HCT116 (cell line): ENCODE measurements at regions of chr17 and their contacts with region 1.

Region 1: DNA sequence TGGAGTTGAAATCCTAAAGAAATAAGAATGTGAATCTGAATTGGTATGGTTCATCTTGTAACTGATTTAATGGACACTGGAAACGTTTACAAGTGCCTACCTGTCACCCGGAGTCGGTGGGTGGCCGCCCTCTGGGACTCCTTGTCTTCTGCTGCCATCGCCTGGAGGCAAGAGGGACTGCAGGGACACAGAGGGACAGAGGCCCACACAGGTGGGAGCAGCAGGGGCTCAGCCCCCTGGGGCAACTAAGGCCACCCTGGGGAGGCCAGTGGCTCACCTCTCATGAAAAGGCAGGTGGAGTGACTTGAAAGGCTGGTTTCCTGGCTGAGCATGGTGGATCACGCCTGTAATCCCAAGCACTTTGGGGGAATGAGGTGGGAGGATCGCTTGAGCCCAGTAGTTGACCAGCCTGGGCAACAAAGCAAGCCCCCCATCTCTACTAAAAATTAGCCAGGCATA is 23.2 kb downstream of the TMEM92 start:
- DNase-seq: peak; percentile 80
- ATAC-seq: peak; percentile 99
- H3K4me3 ChIP-seq: no peak overlapping the region
- H3K27ac ChIP-seq: no peak overlapping the region
- H3K4me1 ChIP-seq: no peaks in the 10 kb centered on the region
- H3K27me3 ChIP-seq: no peaks in the 10 kb centered on the region
- CTCF ChIP-seq: peak; percentile 74 to 99 (median 98)
- POLR2A ChIP-seq: no peak
- RAD21 ChIP-seq: peak; percentile 100

Region 2: GRCh38 chr17:50123649-50124349 is 173.6 kb before region 1 on chr17:
- CTCF ChIA-PET with region 1: no interaction called
- POLR2A ChIA-PET with region 1: no interaction called
- RAD21 ChIA-PET with region 1: no interaction called
- intact Hi-C with region 1: no loop called
- DNase-seq: no peak
- ATAC-seq: peak; percentile 72
- H3K4me3 ChIP-seq: peak overlapping the region; percentile 37 to 49
- H3K27ac ChIP-seq: peak overlapping the region; percentile 34
- H3K4me1 ChIP-seq: peaks cover 9 to 22% of the 10 kb centered on the region in 2 experiments; a peak in 3 of 4 replicates
- H3K27me3 ChIP-seq: peaks cover 6% of the 10 kb centered on the region; the same call in 1 of the 2 replicates
- CTCF ChIP-seq: no peak
- POLR2A ChIP-seq: peak; percentile 63
- RAD21 ChIP-seq: no peak

Region 3: GRCh38 chr17:50169121-50169764 is 128.2 kb before region 1 on chr17:
- CTCF ChIA-PET with region 1: interaction called, 20 read pairs
- POLR2A ChIA-PET with region 1: no interaction called
- RAD21 ChIA-PET with region 1: interaction called in 1 of 2 experiments, 9 read pairs
- intact Hi-C with region 1: loop called (anchors 2 kb)
- DNase-seq: peak; percentile 78
- ATAC-seq: peak; percentile 77
- H3K4me3 ChIP-seq: peak overlapping the region; percentile 19 to 27; a peak in 3 of 4 replicates
- H3K27ac ChIP-seq: no peak overlapping the region
- H3K4me1 ChIP-seq: peaks cover 9 to 46% of the 10 kb centered on the region in 2 experiments
- H3K27me3 ChIP-seq: no peaks in the 10 kb centered on the region
- CTCF ChIP-seq: peak; percentile 97 to 100 (median 98)
- POLR2A ChIP-seq: no peak
- RAD21 ChIP-seq: peak; percentile 99

Region 4: DNA sequence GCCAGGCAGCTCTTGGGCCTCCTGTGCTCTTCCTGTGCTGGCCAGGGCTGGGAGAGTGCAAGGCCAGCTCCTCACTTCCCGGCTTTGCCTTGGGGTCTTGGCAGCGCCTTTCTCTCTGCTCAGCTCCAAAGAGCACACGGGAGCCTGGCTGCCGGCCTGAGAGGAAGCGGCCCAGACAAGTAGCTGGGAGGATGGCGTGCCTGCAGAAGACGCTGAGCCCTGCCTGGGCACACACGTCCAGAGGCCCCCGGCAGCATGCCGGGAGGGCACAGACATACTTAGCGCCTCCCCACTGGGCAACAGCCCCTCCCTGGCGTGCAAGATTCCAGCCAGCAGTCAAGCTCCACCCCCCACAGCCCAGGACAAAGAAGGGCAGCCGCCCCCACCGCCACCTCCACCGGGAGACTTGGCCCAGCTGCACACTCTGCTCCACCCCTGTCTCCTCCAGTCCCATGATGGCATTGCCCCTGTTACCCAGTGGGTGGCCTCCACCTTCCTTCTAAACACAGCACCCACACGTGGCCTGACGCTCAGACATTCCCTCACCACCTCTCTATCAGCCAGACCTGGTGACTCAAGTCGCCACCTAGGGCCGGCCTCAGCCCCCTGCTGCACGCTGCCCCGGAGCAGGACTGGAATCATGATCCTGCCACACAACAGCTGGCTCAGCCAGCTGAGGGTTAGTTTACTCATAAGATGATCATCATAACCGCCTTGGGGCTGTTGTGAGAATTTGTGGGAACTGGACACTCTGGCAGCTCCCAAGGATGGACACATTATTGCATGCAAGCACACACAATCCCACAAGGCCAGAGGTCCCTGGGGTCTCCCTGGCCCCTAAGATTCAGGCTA is 119.2 kb before region 1 on chr17:
- CTCF ChIA-PET with region 1: interaction called, 16 read pairs
- POLR2A ChIA-PET with region 1: no interaction called
- RAD21 ChIA-PET with region 1: no interaction called
- intact Hi-C with region 1: no loop called
- DNase-seq: peak; percentile 90
- ATAC-seq: peak; percentile 94
- H3K4me3 ChIP-seq: peak overlapping the region; percentile 22 to 43
- H3K27ac ChIP-seq: peak overlapping the region; percentile 61
- H3K4me1 ChIP-seq: peaks cover 41 to 56% of the 10 kb centered on the region in 2 experiments
- H3K27me3 ChIP-seq: no peaks in the 10 kb centered on the region
- CTCF ChIP-seq: peak; percentile 80 to 96 (median 82)
- POLR2A ChIP-seq: no peak
- RAD21 ChIP-seq: peak; percentile 72

Region 5: GRCh38 chr17:50269477-50270434 is 27.7 kb before region 1 on chr17:
- CTCF ChIA-PET with region 1: interaction called, 29 read pairs
- POLR2A ChIA-PET with region 1: no interaction called
- RAD21 ChIA-PET with region 1: interaction called, 3 to 4 read pairs
- intact Hi-C with region 1: loop called (anchors 1 kb)
- DNase-seq: peak; percentile 60
- ATAC-seq: peak; percentile 67
- H3K4me3 ChIP-seq: no peak overlapping the region
- H3K27ac ChIP-seq: no peak overlapping the region
- H3K4me1 ChIP-seq: peaks cover 38 to 46% of the 10 kb centered on the region in 2 experiments
- H3K27me3 ChIP-seq: no peaks in the 10 kb centered on the region
- CTCF ChIP-seq: peak; percentile 92 to 98 (median 98)
- POLR2A ChIP-seq: no peak
- RAD21 ChIP-seq: peak; percentile 84